ENCODE measurements at regions of chr19 and their contacts with region 1.

Region 1: DNA sequence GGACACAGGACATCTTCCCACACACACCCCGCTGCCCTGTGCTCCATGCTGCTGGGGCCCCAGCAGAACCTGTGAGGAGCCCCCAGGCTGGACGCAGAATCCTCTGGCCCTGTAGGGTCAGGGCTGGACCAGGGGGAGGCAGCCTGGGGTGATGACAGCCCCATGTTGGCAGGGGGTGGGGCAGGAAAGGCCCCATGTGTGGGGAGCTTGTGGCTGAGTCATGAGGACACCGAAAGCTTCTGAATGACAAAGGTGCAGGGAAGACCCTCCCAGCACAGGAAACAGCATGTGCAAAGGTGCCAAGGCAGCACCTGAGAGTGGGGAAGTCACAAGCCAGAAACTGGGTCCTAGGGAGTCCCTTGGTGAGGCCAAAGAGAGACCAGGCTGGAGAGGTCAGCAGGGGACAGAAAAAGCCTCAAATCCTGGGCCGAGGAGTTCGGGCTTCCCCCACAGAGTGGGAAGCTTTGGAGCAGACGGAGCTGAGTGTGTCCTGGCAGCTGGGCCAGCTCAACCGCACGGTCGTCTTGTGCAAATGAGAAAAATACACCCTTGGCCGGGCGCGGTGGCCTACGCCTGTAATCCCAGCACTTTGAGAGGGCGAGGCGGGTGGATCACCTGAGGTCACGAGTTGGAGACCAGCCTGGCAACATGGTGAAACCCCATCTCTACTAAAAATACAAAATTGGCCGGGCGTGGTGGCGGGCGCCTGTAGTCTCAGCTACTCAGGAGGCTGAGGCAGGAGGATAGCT is 17.5 kb downstream of the ATP8B3 start:
- DNase-seq: peak in 1 of 2 experiments; percentile 39
- H3K4me3 ChIP-seq: no peak overlapping the region
- H3K27ac ChIP-seq: no peak overlapping the region
- H3K4me1 ChIP-seq: peaks cover 0 to 15% (median 8%) of the 10 kb centered on the region in 4 experiments; a peak in 5 of 7 replicates
- H3K27me3 ChIP-seq: peaks cover 0 to 4% (median under 1%) of the 10 kb centered on the region in 4 experiments; a peak in 2 of 7 replicates
- CTCF ChIP-seq: peak in 2 of 3 experiments; percentile 7 to 15; a peak in 2 of 4 replicates
- EP300 ChIP-seq: no peak
- POLR2A ChIP-seq: no peak
- RAD21 ChIP-seq: no peak; a peak in 1 of 4 replicates

Region 2: GRCh38 chr19:1718420-1719291 is 75.9 kb before region 1 on chr19:
- CTCF ChIA-PET with region 1: no interaction called
- POLR2A ChIA-PET with region 1: no interaction called
- DNase-seq: peak in 1 of 2 experiments; percentile 56
- H3K4me3 ChIP-seq: peak overlapping the region; percentile 23 to 65 (median 34)
- H3K27ac ChIP-seq: no peak overlapping the region
- H3K4me1 ChIP-seq: peaks cover 0 to 13% (median 2%) of the 10 kb centered on the region in 4 experiments; a peak in 4 of 7 replicates
- H3K27me3 ChIP-seq: peaks cover 6 to 22% (median 17%) of the 10 kb centered on the region in 4 experiments; a peak in 5 of 7 replicates
- CTCF ChIP-seq: no peak
- EP300 ChIP-seq: no peak
- POLR2A ChIP-seq: no peak
- RAD21 ChIP-seq: no peak

Region 3: GRCh38 chr19:1774999-1775772 is 19.4 kb before region 1 on chr19:
- CTCF ChIA-PET with region 1: interaction called, 150 read pairs
- POLR2A ChIA-PET with region 1: interaction called, 5 read pairs
- DNase-seq: peak; percentile 72 to 92
- H3K4me3 ChIP-seq: peak overlapping the region; percentile 7 to 56 (median 8); a peak in 4 of 8 replicates
- H3K27ac ChIP-seq: no peak overlapping the region
- H3K4me1 ChIP-seq: peaks cover 0 to 4% (median 1%) of the 10 kb centered on the region in 4 experiments; a peak in 3 of 7 replicates
- H3K27me3 ChIP-seq: peaks cover 24 to 72% (median 65%) of the 10 kb centered on the region in 4 experiments
- CTCF ChIP-seq: peak; percentile 85 to 95 (median 88)
- EP300 ChIP-seq: no peak
- POLR2A ChIP-seq: no peak
- RAD21 ChIP-seq: peak; percentile 55 to 71

Region 4: GRCh38 chr19:1812469-1813196 is 18.0 kb after region 1 on chr19:
- CTCF ChIA-PET with region 1: interaction called, 73 read pairs
- POLR2A ChIA-PET with region 1: interaction called, 4 read pairs
- DNase-seq: peak; percentile 93 to 95
- H3K4me3 ChIP-seq: peak overlapping the region; percentile 49 to 69 (median 56)
- H3K27ac ChIP-seq: no peak overlapping the region; the same call in 1 of the 2 replicates
- H3K4me1 ChIP-seq: peaks cover 0 to 2% (median 0%) of the 10 kb centered on the region in 4 experiments; a peak in 3 of 7 replicates
- H3K27me3 ChIP-seq: peaks cover 0 to 3% (median 0%) of the 10 kb centered on the region in 4 experiments; a peak in 3 of 7 replicates
- CTCF ChIP-seq: peak; percentile 80 to 93 (median 84)
- EP300 ChIP-seq: no peak
- POLR2A ChIP-seq: peak in 1 of 2 experiments; percentile 9; a peak in 1 of 3 replicates
- RAD21 ChIP-seq: peak; percentile 86 to 88

Measured in H1 (cell line).